Transverse colon (tissue), 4 donors: ENCODE measurements at regions of chr18 and their contacts with region 1.

Region 1: DNA sequence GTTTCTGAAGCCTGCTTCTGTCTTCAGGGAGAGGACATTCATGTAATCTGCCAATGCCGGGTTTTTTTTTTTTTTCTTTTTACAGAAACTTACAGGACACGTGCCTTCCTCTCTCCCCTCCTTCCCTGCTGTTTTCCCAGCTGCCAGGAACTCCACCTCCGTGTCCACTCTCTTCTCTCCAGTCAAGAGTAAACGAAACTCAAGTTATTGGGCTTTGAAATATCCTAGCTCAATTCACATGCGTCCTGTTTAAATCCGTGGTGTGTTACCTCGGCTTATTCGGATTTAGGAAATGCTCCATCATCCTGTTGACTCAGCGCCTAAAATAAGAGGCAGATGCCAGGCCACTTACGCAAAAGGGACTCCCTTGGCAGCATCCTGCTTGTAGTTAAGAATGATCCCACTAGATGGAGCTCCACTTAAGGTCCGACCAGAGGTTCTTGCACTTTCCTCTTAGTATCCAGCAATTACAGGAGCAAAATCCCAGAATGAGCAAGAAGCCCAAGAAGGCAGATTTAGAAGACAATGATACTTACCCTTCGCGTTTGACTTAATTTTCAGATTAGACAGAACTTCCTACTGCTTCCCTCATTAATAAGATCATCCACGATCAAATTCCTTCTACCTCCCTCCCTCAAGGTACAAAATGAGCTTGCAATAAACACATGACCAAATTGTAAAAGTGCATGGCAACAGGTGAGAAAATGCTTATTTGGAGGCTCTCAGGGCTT is 97.2 kb upstream of the ZCCHC2 start:
- DNase-seq: peak; percentile 77
- H3K4me3 ChIP-seq: peak overlapping the region in 2 of 4 donors; percentile 7 to 29
- H3K27ac ChIP-seq: peak overlapping the region; percentile 59 to 80 (median 72)
- H3K4me1 ChIP-seq: peaks cover 0 to 19% (median 15%) of the 10 kb centered on the region in 4 donors
- H3K27me3 ChIP-seq: no peaks in the 10 kb centered on the region
- CTCF ChIP-seq: peak; percentile 73 to 88 (median 81)
- EP300 ChIP-seq: no peak
- POLR2A ChIP-seq: no peak

Region 2: GRCh38 chr18:62372156-62372555 is 53.5 kb before region 1 on chr18:
- in situ Hi-C with region 1: no loop called
- intact Hi-C with region 1: no loop called
- DNase-seq: no peak
- H3K4me3 ChIP-seq: no peak overlapping the region
- H3K27ac ChIP-seq: no peak overlapping the region
- H3K4me1 ChIP-seq: peaks cover 0 to 4% (median 0%) of the 10 kb centered on the region in 4 donors
- H3K27me3 ChIP-seq: no peaks in the 10 kb centered on the region
- CTCF ChIP-seq: no peak
- EP300 ChIP-seq: no peak
- POLR2A ChIP-seq: no peak

Region 3: GRCh38 chr18:62578980-62579511 is 153.4 kb after region 1 on chr18:
- in situ Hi-C with region 1: loop called in 1 of 4 experiments (anchors 25 kb)
- intact Hi-C with region 1: loop called (anchors 1 kb)
- DNase-seq: no peak
- H3K4me3 ChIP-seq: no peak overlapping the region
- H3K27ac ChIP-seq: no peak overlapping the region
- H3K4me1 ChIP-seq: peaks cover 0 to 17% (median 7%) of the 10 kb centered on the region in 4 donors
- H3K27me3 ChIP-seq: no peaks in the 10 kb centered on the region
- CTCF ChIP-seq: no peak
- EP300 ChIP-seq: no peak
- POLR2A ChIP-seq: no peak

Region 4: DNA sequence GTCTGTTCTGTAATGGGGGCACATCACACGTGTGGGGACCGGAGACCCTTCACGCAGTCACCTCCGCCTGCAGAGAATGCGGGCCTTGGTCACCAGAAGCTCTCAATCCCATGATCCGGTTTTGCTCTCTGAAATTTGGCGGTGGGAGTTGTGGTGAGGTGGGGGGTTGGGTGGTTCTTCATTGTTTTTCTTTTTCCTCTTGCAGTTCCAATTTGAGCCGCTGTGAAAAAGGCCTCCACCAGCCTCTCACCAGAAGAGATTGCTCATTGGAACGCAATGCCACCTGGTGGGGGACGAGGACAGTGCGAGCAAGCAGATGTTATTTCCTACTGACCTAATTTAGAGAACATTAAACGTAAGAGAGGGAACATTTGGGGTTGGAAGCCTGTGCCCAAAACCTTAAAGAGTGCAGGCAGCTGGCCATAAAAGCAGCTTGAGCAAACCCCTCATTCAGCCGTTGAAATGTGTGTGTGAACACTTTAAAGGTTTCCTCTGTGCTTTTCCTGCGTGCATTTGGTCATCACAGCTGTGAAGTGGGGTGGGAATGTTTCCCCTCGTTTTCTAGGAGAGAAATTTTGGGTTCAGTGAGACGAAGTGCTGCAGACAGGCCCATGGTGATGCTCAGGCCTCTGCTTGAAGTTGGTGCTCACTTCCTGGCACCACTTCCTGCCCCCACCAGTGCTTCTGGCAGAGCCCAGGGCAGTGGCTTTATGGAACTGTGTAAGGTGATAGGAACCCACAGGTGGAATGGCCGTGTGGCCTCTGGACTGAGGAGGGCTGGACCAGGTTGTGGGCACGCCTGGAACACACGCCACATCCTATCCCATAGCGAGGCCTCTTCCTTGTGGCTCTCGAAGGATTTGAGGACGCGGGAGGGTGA is 158.9 kb after region 1 on chr18:
- in situ Hi-C with region 1: loop called in 1 of 4 experiments (anchors 25 kb)
- intact Hi-C with region 1: loop called (anchors 1 kb)
- DNase-seq: peak; percentile 88
- H3K4me3 ChIP-seq: no peak overlapping the region
- H3K27ac ChIP-seq: peak overlapping the region; percentile 3 to 45 (median 14)
- H3K4me1 ChIP-seq: peaks cover 4 to 22% (median 5%) of the 10 kb centered on the region in 4 donors
- H3K27me3 ChIP-seq: no peaks in the 10 kb centered on the region
- CTCF ChIP-seq: peak; percentile 97 to 100 (median 98)
- EP300 ChIP-seq: no peak
- POLR2A ChIP-seq: no peak